ENCODE measurements at regions of chr1 and their contacts with region 1.

Region 1: GRCh38 chr1:8848663-8849386 is 29.7 kb downstream of the ENO1 start:
- DNase-seq: peak; percentile 94
- H3K4me3 ChIP-seq: no peak overlapping the region
- H3K27ac ChIP-seq: no peak overlapping the region
- H3K4me1 ChIP-seq: peaks cover 4% of the 10 kb centered on the region
- H3K27me3 ChIP-seq: no peaks in the 10 kb centered on the region
- CTCF ChIP-seq: peak; percentile 85 to 99
- POLR2A ChIP-seq: no peak

Region 2: GRCh38 chr1:8560611-8561544 is 287.9 kb before region 1 on chr1:
- CTCF ChIA-PET with region 1: interaction called, 53 read pairs
- POLR2A ChIA-PET with region 1: interaction called, 3 read pairs
- dilution Hi-C with region 1: no loop called
- intact Hi-C with region 1: loop called (anchors 1 kb)
- DNase-seq: peak; percentile 64
- H3K4me3 ChIP-seq: no peak overlapping the region
- H3K27ac ChIP-seq: no peak overlapping the region
- H3K4me1 ChIP-seq: peaks cover 2% of the 10 kb centered on the region
- H3K27me3 ChIP-seq: no peaks in the 10 kb centered on the region
- CTCF ChIP-seq: peak; percentile 58 to 66
- POLR2A ChIP-seq: no peak

Region 3: GRCh38 chr1:8718850-8719361 is 129.9 kb before region 1 on chr1:
- CTCF ChIA-PET with region 1: interaction called, 140 read pairs
- POLR2A ChIA-PET with region 1: no interaction called
- dilution Hi-C with region 1: no loop called
- intact Hi-C with region 1: loop called (anchors 1 kb)
- DNase-seq: peak; percentile 16
- H3K4me3 ChIP-seq: no peak overlapping the region
- H3K27ac ChIP-seq: no peak overlapping the region
- H3K4me1 ChIP-seq: peaks cover under 1% of the 10 kb centered on the region
- H3K27me3 ChIP-seq: no peaks in the 10 kb centered on the region
- CTCF ChIP-seq: peak in 1 of 2 donors; percentile 20
- POLR2A ChIP-seq: no peak

Region 4: DNA sequence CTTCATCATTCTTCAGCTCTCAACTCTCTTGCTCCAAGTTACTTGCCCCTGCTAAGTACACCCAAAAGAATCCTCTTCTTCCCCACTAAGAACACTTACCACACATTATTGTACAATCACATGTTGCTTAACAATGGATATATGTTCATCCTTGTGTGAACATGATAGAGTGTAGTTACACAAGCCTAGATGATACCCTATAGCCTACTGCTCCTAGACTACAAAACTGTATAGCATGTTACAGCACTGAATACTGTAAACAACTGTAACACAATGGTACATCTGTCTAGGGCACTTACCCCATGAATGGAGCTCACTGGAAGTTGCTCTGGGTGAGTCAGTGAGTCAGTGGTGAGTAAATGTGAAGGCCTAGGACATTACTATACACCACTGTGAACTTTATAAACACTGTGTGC is 108.8 kb before region 1 on chr1:
- CTCF ChIA-PET with region 1: interaction called, 20 read pairs
- POLR2A ChIA-PET with region 1: no interaction called
- dilution Hi-C with region 1: no loop called
- intact Hi-C with region 1: no loop called
- DNase-seq: peak; percentile 68
- H3K4me3 ChIP-seq: no peak overlapping the region
- H3K27ac ChIP-seq: peak overlapping the region; percentile 19
- H3K4me1 ChIP-seq: peaks cover 25% of the 10 kb centered on the region
- H3K27me3 ChIP-seq: no peaks in the 10 kb centered on the region
- CTCF ChIP-seq: no peak
- POLR2A ChIP-seq: no peak

Region 5: DNA sequence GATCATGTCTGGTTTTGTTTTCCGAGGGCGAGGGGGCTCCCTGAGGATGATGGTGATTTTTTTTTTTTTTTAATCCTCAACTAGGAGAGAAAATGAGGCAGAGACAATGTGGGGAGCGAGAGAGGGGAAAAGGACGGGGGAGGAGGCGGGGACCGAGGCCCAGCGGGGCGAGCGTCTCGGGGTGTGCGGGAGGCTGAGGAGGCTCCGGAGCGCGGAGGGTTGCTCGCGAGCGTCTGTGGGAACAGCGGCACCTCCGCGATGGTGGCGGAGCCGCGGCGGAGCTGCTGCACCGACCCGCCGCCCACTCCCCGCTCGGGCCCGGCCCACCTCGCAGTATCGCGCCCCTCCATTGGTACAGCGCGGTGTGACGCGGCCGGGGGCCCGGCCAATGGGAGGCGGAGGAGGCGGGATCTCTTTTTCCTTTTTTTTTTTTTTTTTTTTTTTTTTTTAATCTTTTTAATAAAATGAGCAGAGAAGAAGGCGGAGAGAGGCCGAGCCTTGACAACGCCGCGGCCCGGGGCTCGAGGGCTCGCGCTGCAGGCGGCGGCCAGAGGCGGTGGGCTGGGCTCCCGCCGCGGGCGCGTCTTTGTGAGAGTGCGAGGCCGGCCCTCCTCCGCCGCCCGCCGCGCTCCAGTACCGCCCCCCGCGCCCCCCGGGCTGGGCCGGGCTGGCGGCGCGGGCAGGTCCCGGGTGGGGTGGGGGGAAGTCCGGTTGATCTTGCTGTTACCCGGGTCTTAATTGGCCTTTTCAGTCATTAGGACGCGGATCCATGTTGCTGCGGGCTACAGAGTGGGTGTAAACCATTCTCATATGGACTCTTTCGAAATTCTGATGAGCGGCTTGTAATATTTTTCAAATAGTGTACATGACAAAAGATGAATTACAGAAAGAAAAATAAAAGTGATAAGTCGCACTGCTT is 31.2 kb before region 1 on chr1 and contains the start of gene RERE:
- CTCF ChIA-PET with region 1: interaction called, 40 read pairs
- POLR2A ChIA-PET with region 1: interaction called, 7 read pairs
- dilution Hi-C with region 1: no loop called
- intact Hi-C with region 1: loop called (anchors 1 kb)
- DNase-seq: peak; percentile 95
- H3K4me3 ChIP-seq: peak within 1 kb of the TSS; percentile 84 to 98 (median 91)
- H3K27ac ChIP-seq: peak within 1 kb of the TSS; percentile 92
- H3K4me1 ChIP-seq: peaks cover 60% of the 10 kb centered on the region
- H3K27me3 ChIP-seq: no peaks in the 10 kb centered on the region
- CTCF ChIP-seq: no peak
- POLR2A ChIP-seq: peak; percentile 91
- total RNA-seq, gene RERE: 110 and 113 TPM in 2 replicates

Region 6: DNA sequence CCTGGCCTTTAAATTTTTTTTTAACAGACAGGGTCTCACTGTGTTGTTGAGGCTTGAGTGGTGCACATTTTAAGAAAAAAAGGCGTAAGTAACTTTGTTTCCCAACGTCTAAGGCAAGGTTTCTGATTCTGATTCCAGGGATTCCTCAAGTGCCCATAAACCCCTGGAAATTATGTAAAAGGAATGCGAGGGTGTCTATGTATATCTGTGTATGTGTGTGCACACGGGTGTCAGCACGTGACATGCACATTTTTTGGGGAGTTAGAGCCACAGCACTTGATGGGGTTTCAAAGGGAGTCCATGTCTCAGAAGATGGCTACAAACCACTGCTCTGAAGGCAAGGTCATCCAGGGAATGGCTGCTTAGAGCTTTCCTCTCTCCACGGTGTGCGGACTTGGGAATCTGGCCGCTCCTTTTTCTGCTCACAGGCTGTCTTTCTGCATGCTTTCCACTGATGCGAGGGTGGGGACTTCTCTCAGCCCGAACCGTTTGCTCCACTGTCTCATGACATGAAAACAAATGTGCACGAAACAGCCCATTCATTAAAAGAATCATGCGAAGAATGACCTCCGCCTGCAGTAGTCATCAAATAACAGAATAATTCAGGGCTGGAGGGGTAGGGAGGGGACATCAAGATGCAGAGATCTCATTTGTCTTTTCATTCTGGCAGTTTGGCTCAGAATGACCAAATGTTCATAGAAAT is 12.7 kb before region 1 on chr1:
- CTCF ChIA-PET with region 1: interaction called, 26 read pairs
- POLR2A ChIA-PET with region 1: no interaction called
- dilution Hi-C with region 1: no loop called
- intact Hi-C with region 1: no loop called
- DNase-seq: no peak
- H3K4me3 ChIP-seq: no peak overlapping the region
- H3K27ac ChIP-seq: no peak overlapping the region
- H3K4me1 ChIP-seq: no peaks in the 10 kb centered on the region
- H3K27me3 ChIP-seq: no peaks in the 10 kb centered on the region
- CTCF ChIP-seq: no peak
- POLR2A ChIP-seq: no peak

Region 7: DNA sequence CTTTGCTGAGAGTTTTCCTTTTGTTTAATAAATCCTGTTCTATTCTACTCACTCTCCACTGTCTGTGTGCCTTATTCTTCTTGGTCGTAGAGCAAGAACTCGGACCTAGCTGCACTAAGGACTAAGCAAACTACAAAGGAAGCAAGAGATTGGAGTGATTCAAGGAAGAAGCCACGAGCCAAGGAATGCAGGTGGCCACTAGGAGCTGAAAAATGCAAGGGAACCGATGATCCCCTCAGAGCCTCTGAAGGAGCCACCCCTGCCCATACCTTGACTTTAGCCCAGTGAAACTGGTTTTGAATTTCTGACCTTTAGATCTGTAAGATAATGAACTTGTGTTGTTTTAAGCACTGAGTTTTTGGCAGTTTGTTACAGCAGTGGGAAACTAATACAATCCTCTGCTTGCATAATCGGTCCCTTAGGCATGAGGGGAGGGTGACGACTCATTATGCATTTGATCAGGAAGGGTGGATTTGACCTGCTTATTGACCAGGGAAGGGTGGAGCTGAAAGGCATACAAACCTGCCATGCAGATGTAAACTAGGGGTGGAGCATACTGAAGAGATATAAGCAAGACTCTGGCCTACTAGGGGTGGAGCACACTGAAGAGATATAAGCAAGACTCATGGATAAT is 90.7 kb after region 1 on chr1:
- CTCF ChIA-PET with region 1: no interaction called
- POLR2A ChIA-PET with region 1: no interaction called
- dilution Hi-C with region 1: no loop called
- intact Hi-C with region 1: no loop called
- DNase-seq: no peak
- H3K4me3 ChIP-seq: no peak overlapping the region
- H3K27ac ChIP-seq: no peak overlapping the region
- H3K4me1 ChIP-seq: peaks cover 15% of the 10 kb centered on the region
- H3K27me3 ChIP-seq: no peaks in the 10 kb centered on the region
- CTCF ChIP-seq: no peak
- POLR2A ChIP-seq: no peak

Region 8: GRCh38 chr1:9069326-9070100 is 220.7 kb after region 1 on chr1 and contains the start of gene SLC2A5:
- CTCF ChIA-PET with region 1: no interaction called
- POLR2A ChIA-PET with region 1: no interaction called
- dilution Hi-C with region 1: no loop called
- intact Hi-C with region 1: no loop called
- DNase-seq: no peak
- H3K4me3 ChIP-seq: no peak within 1 kb of the TSS
- H3K27ac ChIP-seq: no peak within 1 kb of the TSS
- H3K4me1 ChIP-seq: peaks cover 3% of the 10 kb centered on the region
- H3K27me3 ChIP-seq: no peaks in the 10 kb centered on the region
- CTCF ChIP-seq: no peak
- POLR2A ChIP-seq: no peak
- total RNA-seq, gene SLC2A5: not detected in 2 replicates